A673 (cell line): ENCODE measurements at regions of chr18 and their contacts with region 1.

Region 1: GRCh38 chr18:3454365-3455089 is 4.6 kb downstream of the TGIF1 start:
- DNase-seq: peak; percentile 87
- H3K4me3 ChIP-seq: peak overlapping the region; percentile 91
- H3K27ac ChIP-seq: peak overlapping the region; percentile 96
- H3K4me1 ChIP-seq: peaks cover 38% of the 10 kb centered on the region
- H3K27me3 ChIP-seq: no peaks in the 10 kb centered on the region
- CTCF ChIP-seq: peak; percentile 78

Region 2: DNA sequence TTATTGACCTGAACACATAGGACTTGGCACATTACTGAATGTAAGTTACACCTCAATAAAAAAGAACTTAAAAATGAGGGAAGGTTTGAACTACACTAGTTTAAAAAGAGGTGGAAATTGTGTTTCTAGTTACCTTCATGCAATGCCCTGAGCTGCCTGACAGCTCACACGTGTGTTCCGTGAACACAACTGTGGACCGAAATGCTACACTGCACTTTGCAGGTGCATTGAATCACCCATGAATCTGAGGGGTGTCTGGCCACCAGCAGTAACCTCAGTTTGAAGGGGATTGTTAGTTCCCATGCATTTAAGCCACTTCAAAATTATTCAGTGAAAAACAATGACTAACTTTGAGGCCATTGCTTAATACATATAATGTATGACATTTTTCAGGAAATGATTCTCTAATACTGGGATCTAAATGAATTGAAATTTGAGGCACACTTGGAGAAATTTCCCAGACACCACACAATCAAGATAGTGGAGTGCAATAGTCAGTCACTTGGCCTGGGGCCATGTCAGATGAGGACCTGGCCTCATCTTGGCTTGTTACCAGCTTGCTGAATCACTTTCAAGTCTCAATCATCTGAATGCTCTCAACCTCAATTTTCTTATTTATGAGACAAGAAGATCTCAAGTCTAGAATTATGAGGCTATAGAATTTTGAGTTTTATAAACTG is 133.3 kb before region 1 on chr18:
- CTCF ChIA-PET with region 1: interaction called, 10 read pairs
- POLR2A ChIA-PET with region 1: no interaction called
- intact Hi-C with region 1: no loop called
- DNase-seq: peak; percentile 80
- H3K4me3 ChIP-seq: no peak overlapping the region
- H3K27ac ChIP-seq: no peak overlapping the region
- H3K4me1 ChIP-seq: peaks cover 16% of the 10 kb centered on the region
- H3K27me3 ChIP-seq: no peaks in the 10 kb centered on the region
- CTCF ChIP-seq: no peak

Region 3: GRCh38 chr18:3466045-3466444 is 11.5 kb after region 1 on chr18:
- CTCF ChIA-PET with region 1: no interaction called
- POLR2A ChIA-PET with region 1: no interaction called
- intact Hi-C with region 1: no loop called
- DNase-seq: peak; percentile 40
- H3K4me3 ChIP-seq: no peak overlapping the region
- H3K27ac ChIP-seq: no peak overlapping the region
- H3K4me1 ChIP-seq: peaks cover 9% of the 10 kb centered on the region
- H3K27me3 ChIP-seq: no peaks in the 10 kb centered on the region
- CTCF ChIP-seq: no peak

Region 4: DNA sequence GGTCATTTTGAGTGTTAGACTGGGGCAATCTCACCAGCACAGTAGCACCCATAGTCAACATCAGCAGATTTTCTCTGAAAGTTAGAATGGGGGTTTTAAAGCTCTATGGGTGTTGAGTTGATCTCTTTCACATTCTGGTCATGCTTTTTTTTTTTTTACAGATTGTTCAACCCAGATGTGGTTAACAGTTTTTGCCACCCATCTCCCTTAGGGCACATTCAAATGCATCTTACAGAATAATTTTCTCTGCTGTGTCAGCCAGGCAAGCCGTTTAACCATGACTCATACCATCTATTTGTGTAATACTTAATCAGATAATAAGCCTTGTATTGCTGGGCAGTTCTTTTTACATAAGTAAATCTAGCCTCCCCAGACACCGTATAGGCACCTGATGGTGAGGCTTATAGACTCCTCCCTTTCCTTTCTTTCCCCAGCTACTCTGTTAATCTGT is 57.4 kb after region 1 on chr18:
- CTCF ChIA-PET with region 1: no interaction called
- POLR2A ChIA-PET with region 1: no interaction called
- intact Hi-C with region 1: loop called (anchors 1 kb)
- DNase-seq: peak; percentile 94
- H3K4me3 ChIP-seq: no peak overlapping the region
- H3K27ac ChIP-seq: peak overlapping the region; percentile 60
- H3K4me1 ChIP-seq: peaks cover 40% of the 10 kb centered on the region
- H3K27me3 ChIP-seq: no peaks in the 10 kb centered on the region
- CTCF ChIP-seq: no peak

Region 5: GRCh38 chr18:3665780-3666525 is 211.4 kb after region 1 on chr18:
- CTCF ChIA-PET with region 1: interaction called, 4 read pairs
- POLR2A ChIA-PET with region 1: no interaction called
- intact Hi-C with region 1: loop called (anchors 2 kb)
- DNase-seq: peak; percentile 94
- H3K4me3 ChIP-seq: peak overlapping the region; percentile 21
- H3K27ac ChIP-seq: peak overlapping the region; percentile 88
- H3K4me1 ChIP-seq: peaks cover 54% of the 10 kb centered on the region
- H3K27me3 ChIP-seq: no peaks in the 10 kb centered on the region
- CTCF ChIP-seq: peak; percentile 96